ENCODE measurements at regions of chr20 and their contacts with region 1.

Region 1: DNA sequence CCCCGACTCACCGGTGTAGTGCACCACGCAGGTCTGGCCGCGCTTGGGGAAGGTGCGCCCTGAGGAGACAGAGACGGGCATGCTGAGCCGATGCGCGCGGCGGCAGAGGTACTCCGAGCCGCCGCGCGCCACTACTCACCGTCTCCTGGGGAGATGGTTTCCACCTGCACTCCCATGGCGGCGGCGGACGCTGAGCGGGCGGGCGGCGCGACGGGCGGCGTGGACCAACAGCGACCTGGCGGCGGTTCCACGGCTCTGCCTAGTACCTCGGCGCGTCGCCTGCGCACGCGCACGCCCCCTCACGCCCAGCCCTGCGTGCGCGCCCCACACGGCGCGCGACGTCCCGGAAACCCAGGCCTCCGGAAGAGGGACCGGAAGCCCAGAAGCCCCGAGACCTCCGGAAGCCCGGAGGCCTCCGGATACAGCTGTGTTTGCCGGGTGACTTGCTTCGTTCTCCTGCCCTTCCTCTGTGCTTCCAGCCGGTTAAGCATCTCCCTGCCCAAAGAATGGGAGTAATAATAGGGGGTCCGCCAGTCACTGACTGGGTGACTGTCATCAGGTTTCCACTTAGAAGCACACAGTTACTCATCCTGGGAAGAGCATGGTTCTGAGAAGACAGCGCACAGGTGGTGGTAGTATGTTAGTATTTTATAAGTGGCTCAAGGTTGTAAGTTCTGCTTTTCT is at the start of gene FKBP1A:
- DNase-seq: peak; percentile 75 to 98 (median 87)

Region 2: DNA sequence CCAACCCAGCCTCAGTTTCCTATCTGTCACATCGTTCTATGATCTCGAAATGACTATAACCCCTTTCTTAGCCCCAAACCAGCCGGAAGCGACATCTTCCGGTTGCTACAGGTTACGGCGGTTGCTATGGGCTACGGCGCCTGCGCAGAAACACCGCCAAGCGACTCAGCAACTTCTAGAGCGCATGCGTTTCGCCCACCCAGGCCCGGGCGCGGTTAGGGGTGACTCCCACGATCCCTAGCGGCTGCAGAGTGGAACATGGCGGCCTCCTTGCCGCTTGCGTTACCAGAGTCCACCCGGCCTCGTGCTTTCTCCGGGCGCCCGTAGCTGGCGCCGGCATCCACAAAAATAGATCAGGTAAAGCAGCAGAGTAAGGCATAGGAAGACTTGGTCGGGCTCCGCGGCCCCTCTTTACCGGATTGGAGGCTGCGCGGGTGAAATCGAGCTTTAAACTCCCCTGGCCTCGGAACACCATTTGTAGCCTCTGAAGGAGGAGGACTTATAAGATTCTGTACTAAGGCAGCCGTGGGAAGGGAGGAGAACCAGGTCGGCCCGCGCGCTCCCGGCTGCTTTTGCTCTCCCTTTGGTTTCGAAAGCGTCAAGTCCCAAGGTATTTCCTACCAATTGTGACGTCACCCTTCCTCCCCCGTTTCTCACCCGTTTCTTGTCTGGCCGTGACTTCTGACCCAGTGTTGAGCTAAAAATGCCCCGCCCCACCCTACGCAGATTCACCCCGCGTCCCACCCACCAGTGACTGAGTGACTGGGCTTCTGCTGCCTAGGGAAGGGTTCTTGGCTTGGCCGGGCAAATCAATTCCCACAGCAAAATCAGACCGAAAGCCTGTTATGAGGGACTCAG is 67.6 kb before region 1 on chr20:
- intact Hi-C with region 1: loop called (anchors 1 kb)
- DNase-seq: peak; percentile 91 to 99 (median 95)

Region 3: DNA sequence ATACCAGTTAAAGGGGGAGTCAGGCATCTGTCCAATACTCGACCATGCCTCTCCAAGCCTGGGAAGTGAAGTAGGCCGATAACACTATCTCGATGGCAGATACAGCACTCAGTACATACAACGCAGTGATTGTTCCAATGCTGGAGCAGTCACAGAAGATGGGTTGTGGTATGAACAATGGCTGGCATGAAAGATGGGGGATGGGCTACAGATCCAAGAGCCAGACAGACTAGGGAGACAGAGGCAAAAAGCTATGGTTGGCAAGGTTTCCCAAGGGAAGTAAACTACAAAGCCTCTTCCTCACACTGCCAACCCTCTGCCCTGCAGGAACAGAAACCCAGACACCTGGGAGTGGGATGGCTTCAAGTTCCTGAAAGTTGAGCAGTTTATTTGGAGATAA is 19.4 kb before region 1 on chr20:
- intact Hi-C with region 1: loop called (anchors 2 kb)
- DNase-seq: peak in 6 of 10 donors; percentile 39 to 90 (median 66)

Measured in posterior cingulate gyrus (tissue), 11 donors.